ENCODE measurements at regions of chr19 and their contacts with region 1.

Region 1: DNA sequence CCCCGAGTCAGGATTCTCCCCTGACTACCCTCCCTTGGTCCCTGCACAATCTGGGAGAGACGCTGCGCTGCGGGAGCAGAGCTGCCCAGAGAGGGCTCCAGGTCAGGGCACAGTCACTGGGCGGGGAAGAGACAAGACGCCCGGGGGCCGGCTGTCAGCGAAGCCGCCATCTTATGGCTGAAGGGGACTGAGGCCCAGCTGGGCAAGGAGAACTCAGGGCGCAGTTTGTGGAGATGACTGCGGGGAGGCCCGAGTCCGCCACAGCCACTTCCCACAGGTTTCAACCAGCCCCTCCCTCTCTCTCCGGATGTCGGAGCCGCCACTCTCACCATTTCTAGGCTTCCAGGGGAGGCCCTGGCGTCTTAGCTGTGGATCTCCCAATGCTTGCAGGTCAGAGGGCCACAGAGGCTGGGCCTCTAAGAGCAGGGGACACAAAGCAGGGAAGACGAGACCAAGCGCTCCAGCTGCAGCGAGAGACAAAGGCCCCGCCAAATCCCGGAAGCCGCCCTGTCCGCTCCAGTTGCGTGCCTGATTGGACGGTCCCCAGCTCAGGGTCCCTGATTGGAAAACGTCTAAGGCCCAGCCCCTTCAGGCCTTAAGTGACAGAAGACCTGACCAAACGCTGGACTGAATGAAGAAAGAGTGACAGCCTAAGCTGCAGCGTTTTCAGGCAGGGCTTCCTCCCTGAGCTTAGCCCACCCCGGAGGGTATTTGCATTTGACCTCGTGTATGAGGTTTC is at the start of gene ZNF724:
- DNase-seq: peak; percentile 83 to 97 (median 96)
- H3K4me3 ChIP-seq: peak within 1 kb of the TSS; percentile 30 to 87 (median 72)
- H3K27ac ChIP-seq: peak within 1 kb of the TSS in 34 of 59 donors; percentile 1 to 76 (median 43)
- H3K27me3 ChIP-seq: no peaks in the 10 kb centered on the region
- CTCF ChIP-seq: peak in 6 of 56 donors; percentile 9 to 28 (median 16)
- total RNA-seq, gene ZNF724: 1.6 to 6.2 (median 3.6) TPM

Region 2: GRCh38 chr19:21851596-21852345 is 1398.3 kb before region 1 on chr19:
- intact Hi-C with region 1: loop called in 1 of 2 experiments (anchors 10 kb)
- DNase-seq: peak; percentile 90 to 97 (median 95)
- H3K4me3 ChIP-seq: peak overlapping the region; percentile 51 to 96 (median 87)
- H3K27ac ChIP-seq: peak overlapping the region in 49 of 59 donors; percentile 1 to 87 (median 72)
- H3K27me3 ChIP-seq: no peaks in the 10 kb centered on the region
- CTCF ChIP-seq: peak in 14 of 56 donors; percentile 5 to 31 (median 18)